ENCODE measurements at regions of chr11 and their contacts with region 1.

Region 1: GRCh38 chr11:102007567-102008437 is 39.4 kb upstream of the CFAP300 start:
- DNase-seq: peak; percentile 24
- H3K4me3 ChIP-seq: no peak overlapping the region
- CTCF ChIP-seq: no peak

Region 2: DNA sequence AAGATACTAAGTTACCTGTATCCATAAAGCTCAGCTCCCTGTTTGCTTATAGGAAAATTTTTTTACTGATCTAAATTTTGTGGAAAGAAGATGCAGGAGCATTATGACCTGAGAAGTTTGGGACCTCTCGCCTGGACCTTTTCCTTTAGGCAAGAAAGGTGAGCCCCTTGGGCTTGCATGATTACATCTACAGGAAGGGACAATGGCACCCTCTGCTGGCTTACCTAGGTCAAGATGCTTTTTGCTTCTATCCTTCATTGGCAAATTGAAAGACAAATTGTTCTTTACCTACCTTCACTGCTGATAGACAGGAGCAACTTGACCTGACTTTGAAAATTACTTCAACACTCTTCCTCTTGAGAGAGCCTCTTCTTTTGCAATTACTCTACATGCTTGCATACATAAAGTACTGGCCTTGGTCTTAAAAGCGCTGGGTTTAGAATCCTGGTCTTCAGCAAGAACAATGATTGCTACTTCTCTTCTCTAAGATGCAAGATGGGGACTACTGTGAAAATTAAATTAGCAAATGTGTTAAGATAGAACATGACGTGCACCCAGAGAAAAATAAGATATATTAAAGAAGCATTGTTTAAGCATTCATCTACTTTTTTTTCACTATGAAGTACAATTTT is 571.2 kb before region 1 on chr11:
- in situ Hi-C with region 1: loop called (anchors 10 kb)
- DNase-seq: no peak
- H3K4me3 ChIP-seq: no peak overlapping the region
- CTCF ChIP-seq: peak; percentile 83

Region 3: GRCh38 chr11:101860696-101861427 is 146.9 kb before region 1 on chr11:
- in situ Hi-C with region 1: loop called (anchors 5 kb)
- DNase-seq: peak; percentile 59
- H3K4me3 ChIP-seq: no peak overlapping the region
- CTCF ChIP-seq: peak; percentile 81

Region 4: DNA sequence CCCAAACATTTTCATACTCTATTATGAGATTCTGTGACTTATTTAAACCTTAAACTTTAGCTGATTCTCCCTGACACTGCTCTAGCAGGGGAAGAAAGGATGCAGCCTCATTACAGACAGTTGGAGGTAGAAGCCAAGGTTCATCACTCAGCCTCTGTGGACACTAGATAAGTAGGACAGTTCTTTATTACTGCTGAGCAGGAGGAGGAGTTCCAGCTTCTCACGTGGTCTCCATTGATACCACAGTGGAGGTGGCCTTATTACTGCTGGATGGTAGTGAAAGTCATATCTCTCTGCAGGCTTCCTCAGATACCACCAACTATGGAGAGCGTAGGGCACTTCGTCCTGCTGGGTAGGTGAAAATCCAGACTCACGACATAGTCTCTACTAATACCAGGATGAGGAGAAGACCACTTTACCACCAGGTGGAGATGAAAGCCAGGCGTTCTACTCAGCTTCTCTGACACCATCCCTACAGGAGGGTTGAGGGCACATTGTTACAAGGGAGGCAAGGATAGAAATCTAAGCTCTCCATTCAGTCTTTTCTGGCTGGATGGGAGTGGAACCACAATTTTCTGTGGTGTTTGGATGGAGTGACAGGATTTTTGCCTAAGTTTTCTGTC is 78.4 kb before region 1 on chr11:
- in situ Hi-C with region 1: no loop called
- DNase-seq: no peak
- H3K4me3 ChIP-seq: no peak overlapping the region
- CTCF ChIP-seq: no peak

Region 5: DNA sequence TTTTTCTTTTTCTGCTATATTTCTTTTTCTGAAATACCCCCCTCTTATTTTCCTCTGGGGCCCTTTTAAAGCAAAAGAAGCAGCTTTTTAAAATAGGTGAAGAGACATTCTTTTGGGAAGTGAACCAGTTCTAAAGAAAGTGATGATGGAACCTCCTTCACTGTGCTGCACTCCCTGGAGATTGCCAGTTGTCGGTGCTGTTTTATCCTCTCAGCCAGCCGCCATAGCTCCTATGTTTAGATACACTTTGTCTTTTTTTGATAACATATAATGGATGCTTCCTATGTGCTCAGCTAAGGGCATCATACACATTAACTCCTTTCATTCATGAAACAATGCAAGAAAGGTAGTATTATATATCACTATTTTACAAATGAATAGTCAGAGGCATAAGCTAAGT is 53.5 kb after region 1 on chr11:
- in situ Hi-C with region 1: no loop called
- DNase-seq: no peak
- H3K4me3 ChIP-seq: no peak overlapping the region
- CTCF ChIP-seq: peak; percentile 27

Measured in astrocyte of the cerebellum (primary cell).